Esophagus muscularis mucosa (tissue), 4 donors: ENCODE measurements at regions of chr1 and their contacts with region 1.

Region 1: GRCh38 chr1:211382714-211383480 is 56.3 kb downstream of the TRAF5 start:
- DNase-seq: peak; percentile 97
- H3K4me3 ChIP-seq: peak overlapping the region; percentile 65 to 84 (median 68)
- H3K27ac ChIP-seq: peak overlapping the region; percentile 90 to 97 (median 93)
- H3K4me1 ChIP-seq: peaks cover 7 to 19% (median 13%) of the 10 kb centered on the region in 4 donors
- H3K27me3 ChIP-seq: no peaks in the 10 kb centered on the region
- CTCF ChIP-seq: no peak
- EP300 ChIP-seq: no peak
- POLR2A ChIP-seq: peak; percentile 87

Region 2: DNA sequence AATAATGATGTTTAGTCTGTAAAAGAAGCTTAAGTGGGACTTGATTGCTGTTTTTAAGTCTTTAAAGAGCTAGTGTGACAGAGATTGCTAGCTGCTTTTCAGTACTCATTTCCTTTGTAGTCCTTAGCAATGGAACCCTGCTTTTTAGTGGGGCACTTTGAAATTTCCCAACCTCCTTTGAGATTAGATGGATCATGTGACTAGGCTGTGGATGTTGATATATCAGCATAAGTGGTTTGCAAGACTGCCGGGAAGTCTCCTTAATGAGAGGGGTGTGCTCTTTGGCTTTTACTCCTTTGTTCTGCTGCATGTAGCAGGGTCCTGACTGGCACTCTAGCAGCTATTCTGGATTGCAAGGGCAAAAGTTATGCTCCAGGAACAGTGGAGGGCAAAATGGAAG is 135.0 kb before region 1 on chr1:
- intact Hi-C with region 1: no loop called
- DNase-seq: no peak
- H3K4me3 ChIP-seq: no peak overlapping the region
- H3K27ac ChIP-seq: no peak overlapping the region
- H3K4me1 ChIP-seq: no peaks in the 10 kb centered on the region
- H3K27me3 ChIP-seq: no peaks in the 10 kb centered on the region
- CTCF ChIP-seq: no peak
- EP300 ChIP-seq: no peak
- POLR2A ChIP-seq: no peak

Region 3: DNA sequence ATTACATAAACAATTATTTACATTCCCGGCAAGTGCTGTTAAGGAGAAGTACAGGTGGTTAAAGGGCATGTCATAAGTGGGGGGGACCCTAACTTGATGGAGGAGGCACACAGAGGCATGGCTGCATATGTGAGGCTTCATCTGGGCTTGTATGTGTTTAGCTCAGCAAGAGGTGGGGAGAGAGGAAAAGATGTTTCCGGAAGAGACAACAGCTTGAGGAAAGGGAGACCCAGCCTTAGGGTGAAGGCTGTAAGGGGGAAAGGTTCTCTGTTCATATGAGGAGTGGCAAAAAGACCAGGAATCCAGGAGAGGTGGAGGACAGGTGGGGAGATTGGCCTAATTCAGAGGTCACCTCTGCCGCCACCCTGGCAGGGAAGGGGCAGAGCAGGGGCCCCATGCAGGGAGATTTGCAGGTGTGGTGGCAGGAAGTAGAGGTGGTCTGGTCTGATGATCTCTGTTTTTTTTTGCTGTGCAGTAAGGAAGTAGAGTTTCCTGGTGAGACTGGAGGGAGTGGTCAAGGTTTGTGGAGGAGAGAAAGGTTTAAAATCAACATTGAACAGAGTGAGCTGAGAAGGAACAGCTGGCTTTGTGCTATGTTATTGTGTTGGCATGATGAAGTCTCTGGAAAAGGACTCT is 47.3 kb before region 1 on chr1:
- intact Hi-C with region 1: loop called (anchors 5 kb)
- DNase-seq: no peak
- H3K4me3 ChIP-seq: no peak overlapping the region
- H3K27ac ChIP-seq: no peak overlapping the region
- H3K4me1 ChIP-seq: peaks cover 10 to 97% (median 86%) of the 10 kb centered on the region in 4 donors
- H3K27me3 ChIP-seq: no peaks in the 10 kb centered on the region
- CTCF ChIP-seq: no peak
- EP300 ChIP-seq: no peak
- POLR2A ChIP-seq: no peak

Region 4: DNA sequence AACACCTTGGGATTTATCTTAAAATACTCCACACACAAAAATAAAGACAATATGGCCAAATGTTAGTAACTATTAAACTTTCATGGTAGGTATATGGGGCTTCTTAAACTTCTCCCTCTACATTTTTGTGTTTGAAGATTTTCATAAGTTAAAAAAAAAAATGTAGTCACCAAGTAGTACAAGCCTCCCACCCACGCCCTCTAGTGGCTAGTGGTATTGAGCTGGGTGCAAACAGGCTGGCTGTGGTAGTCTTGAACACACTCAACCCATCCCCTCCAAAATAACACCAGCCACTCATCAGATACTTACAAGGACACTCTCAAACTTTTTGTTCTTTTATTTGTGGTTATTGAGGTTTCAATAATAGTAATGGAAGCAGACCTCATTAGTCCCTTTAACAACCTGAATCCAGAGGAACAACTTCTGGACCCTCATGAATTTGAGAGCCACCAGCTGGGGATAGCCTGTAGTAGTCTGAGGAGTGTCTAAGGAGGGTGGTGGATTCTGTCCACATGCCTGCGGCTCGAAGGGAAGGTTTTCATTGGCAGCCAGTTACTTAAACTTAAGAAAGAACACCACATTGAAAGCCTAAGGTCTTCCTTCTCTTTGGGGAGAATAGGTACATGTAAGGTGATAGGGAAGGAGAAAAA is 93.4 kb after region 1 on chr1:
- intact Hi-C with region 1: loop called (anchors 10 kb)
- DNase-seq: no peak
- H3K4me3 ChIP-seq: no peak overlapping the region
- H3K27ac ChIP-seq: no peak overlapping the region
- H3K4me1 ChIP-seq: peaks cover 0 to 20% (median 15%) of the 10 kb centered on the region in 4 donors
- H3K27me3 ChIP-seq: peaks cover 0 to 26% (median 0%) of the 10 kb centered on the region in 4 donors
- CTCF ChIP-seq: peak; percentile 76 to 87 (median 81)
- EP300 ChIP-seq: no peak
- POLR2A ChIP-seq: no peak